Right lobe of liver (tissue), 6 donors: ENCODE measurements at regions of chr1 and their contacts with region 1.

Region 1: DNA sequence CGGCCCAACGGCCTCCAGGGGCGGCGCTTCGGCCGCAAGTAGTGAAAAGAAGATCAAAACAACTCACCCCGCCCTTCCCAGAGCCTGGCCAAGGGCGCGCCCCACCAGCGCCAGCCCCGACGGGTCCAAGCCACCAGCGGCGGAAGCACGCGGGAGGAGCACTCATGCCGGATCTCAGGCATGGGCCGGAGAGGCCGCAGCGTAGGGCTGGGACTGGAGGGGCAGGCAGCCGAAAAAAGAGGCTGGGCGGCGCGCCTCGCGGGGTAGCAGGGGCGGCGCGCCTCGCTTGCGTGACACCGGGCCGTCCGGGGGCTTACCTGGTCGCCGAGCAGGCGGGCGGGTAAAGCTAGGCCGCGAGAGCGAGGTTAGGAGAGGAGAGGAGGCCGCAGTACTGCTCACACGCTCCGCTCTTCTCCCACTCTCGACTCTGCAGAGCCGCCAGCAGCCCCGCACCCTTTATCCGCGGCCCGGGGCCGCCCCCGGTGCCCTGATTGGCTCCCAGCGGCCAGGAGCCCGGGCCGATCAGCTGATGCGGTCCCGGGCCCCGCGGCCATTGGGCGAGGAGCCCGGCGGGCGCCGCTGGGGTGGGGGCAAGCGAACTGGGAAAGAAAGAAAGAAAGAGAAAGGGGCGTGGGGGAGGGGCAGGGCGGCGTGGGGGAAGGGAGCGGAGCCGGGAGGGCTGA is at the start of gene GLUL:
- DNase-seq: peak; percentile 97
- ATAC-seq: peak; percentile 85 to 94 (median 86)
- H3K4me3 ChIP-seq: peak within 1 kb of the TSS; percentile 79 to 88 (median 88)
- H3K27ac ChIP-seq: peak within 1 kb of the TSS; percentile 98
- H3K4me1 ChIP-seq: peaks cover 0 to 28% (median 2%) of the 10 kb centered on the region in 4 donors
- H3K27me3 ChIP-seq: no peaks in the 10 kb centered on the region
- CTCF ChIP-seq: peak in 1 of 4 donors; percentile 20
- POLR2A ChIP-seq: peak; percentile 99
- total RNA-seq, gene GLUL: 184 to 493 (median 389) TPM

Region 2: DNA sequence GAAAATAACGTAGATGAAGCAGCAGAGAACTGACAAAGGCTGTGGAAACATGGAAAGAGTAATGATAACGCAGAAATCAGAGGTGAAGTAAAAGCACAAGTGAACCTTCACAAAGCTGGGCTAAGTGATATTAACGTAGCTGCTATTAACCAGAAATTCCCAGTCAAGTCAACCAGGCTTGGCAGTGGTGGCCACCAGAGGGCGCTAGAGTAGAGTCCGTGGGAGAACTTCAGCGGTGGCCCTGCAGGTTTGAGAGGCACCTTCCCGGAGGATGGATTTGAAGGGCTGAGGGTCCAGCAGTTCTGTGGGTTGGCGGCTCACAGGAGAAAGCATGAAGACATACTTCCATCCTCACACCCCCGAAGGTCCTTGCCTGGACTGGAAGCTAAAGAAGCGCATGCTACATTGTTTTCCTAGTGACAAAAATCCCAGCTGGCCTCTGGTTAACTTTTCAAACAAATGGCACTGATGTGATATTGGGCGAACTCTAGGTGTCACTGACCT is 248.3 kb before region 1 on chr1:
- intact Hi-C with region 1: loop called (anchors 5 to 10 kb)
- DNase-seq: peak; percentile 90 to 93 (median 91)
- ATAC-seq: peak; percentile 81 to 88 (median 84)
- H3K4me3 ChIP-seq: no peak overlapping the region
- H3K27ac ChIP-seq: peak overlapping the region; percentile 71 to 80 (median 72)
- H3K4me1 ChIP-seq: peaks cover 0 to 10% (median 0%) of the 10 kb centered on the region in 4 donors
- H3K27me3 ChIP-seq: no peaks in the 10 kb centered on the region
- CTCF ChIP-seq: peak; percentile 92 to 98 (median 94)
- POLR2A ChIP-seq: no peak

Region 3: DNA sequence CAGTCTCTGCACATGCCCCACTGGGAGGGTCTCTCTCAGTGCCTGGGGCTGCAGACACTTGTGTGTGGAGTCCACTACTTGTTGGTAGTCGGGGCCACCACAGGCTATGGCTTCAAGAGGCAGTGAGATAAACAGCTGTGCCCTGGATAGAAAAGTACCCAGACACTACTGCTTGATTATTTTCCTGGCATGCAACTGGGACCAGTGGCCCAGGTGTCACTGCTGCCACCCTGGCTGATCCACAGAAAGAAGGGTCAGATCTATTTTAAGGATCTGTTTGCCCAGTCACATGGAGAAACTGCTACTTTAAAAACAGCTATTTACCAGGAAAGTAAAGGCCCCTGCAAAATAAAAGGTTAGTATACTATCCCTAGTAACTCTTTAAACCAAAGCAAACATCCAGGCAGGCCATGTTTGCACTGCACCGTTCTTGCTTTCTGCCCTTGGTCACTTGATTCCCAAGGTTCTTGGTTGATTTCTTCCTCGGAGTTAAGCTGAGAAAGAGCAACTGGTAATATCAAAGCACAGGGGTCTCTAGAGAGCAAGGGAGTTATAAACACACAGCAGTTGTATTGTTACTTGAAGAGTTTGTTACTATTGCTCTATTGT is 99.8 kb before region 1 on chr1:
- intact Hi-C with region 1: loop called in 1 of 2 experiments (anchors 5 kb)
- DNase-seq: peak; percentile 49 to 86 (median 81)
- ATAC-seq: peak; percentile 57 to 75 (median 70)
- H3K4me3 ChIP-seq: peak overlapping the region in 2 of 3 donors; percentile 6 to 46
- H3K27ac ChIP-seq: peak overlapping the region; percentile 80 to 98 (median 98)
- H3K4me1 ChIP-seq: peaks cover 0 to 53% (median 20%) of the 10 kb centered on the region in 4 donors
- H3K27me3 ChIP-seq: no peaks in the 10 kb centered on the region
- CTCF ChIP-seq: no peak
- POLR2A ChIP-seq: no peak